ENCODE measurements at regions of chr3 and their contacts with region 1.

Region 1: GRCh38 chr3:65412588-65412987 is 626.1 kb downstream of the MAGI1 start:
- DNase-seq: peak in 4 of 5 donors; percentile 74 to 81 (median 76)
- ATAC-seq: peak; percentile 88 to 93 (median 92)
- H3K4me3 ChIP-seq: no peak overlapping the region
- H3K27ac ChIP-seq: peak overlapping the region in 6 of 12 donors; percentile 49 to 81 (median 56)
- H3K4me1 ChIP-seq: peaks cover 7 to 57% (median 31%) of the 10 kb centered on the region in 12 donors
- H3K27me3 ChIP-seq: no peaks in the 10 kb centered on the region
- CTCF ChIP-seq: peak in 9 of 12 donors; percentile 30 to 66 (median 43)
- POLR2A ChIP-seq: no peak

Region 2: DNA sequence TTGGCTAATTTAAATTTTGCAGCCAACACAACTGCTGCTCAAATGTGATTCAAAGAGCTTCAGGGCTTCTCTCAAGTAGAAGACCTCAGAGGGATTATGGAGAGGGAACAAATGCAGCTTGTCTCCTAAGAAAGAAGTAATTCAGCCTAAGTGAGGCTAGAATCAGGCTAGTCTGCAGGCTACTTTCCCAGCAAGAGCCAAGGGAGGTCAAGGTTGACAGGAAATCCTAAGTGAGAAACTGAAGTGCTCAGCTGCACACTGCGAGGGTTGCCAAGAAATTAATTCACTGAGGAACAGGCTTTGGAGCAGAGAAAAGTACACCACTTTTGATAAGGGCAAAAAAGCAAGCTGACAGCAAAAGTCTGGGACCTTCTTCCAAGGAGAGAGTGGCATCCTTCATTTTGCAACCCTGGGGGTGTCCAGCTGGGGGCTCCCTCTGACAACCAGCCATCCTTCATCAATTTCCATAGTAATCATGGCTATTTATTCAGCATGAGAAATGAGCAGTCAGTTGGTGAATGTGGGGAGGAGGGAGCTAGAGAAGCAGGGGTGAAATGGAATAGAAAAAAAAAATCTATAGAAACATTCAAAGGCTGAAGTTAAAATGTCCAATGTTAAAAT is 78.4 kb before region 1 on chr3:
- intact Hi-C with region 1: loop called in 2 of 10 experiments (anchors 2 to 5 kb)
- DNase-seq: peak in 3 of 5 donors; percentile 32 to 58 (median 46)
- ATAC-seq: peak; percentile 39 to 75 (median 53)
- H3K4me3 ChIP-seq: no peak overlapping the region
- H3K27ac ChIP-seq: peak overlapping the region in 2 of 12 donors; percentile 3 to 13
- H3K4me1 ChIP-seq: peaks cover 0 to 30% (median 13%) of the 10 kb centered on the region in 12 donors
- H3K27me3 ChIP-seq: no peaks in the 10 kb centered on the region
- CTCF ChIP-seq: peak in 10 of 12 donors; percentile 3 to 56 (median 30)
- POLR2A ChIP-seq: no peak

Region 3: GRCh38 chr3:65342084-65342683 is 70.4 kb before region 1 on chr3:
- intact Hi-C with region 1: loop called in 2 of 10 experiments (anchors 5 kb)
- DNase-seq: peak in 4 of 5 donors; percentile 25 to 61 (median 37)
- ATAC-seq: peak in 3 of 4 donors; percentile 47 to 59 (median 50)
- H3K4me3 ChIP-seq: no peak overlapping the region
- H3K27ac ChIP-seq: no peak overlapping the region
- H3K4me1 ChIP-seq: peaks cover 0 to 23% (median 4%) of the 10 kb centered on the region in 12 donors
- H3K27me3 ChIP-seq: no peaks in the 10 kb centered on the region
- CTCF ChIP-seq: peak; percentile 29 to 64 (median 54)
- POLR2A ChIP-seq: no peak

Measured in heart left ventricle (tissue), 16 donors.